GM12878 (cell line): ENCODE measurements at regions of chr13 and their contacts with region 1.

Region 1: GRCh38 chr13:50365408-50366391 is 350.5 kb downstream of the KCNRG start:
- DNase-seq: peak; percentile 67
- ATAC-seq: peak; percentile 81
- H3K4me3 ChIP-seq: no peak overlapping the region
- H3K27ac ChIP-seq: no peak overlapping the region
- H3K4me1 ChIP-seq: peaks cover 24% of the 10 kb centered on the region
- H3K27me3 ChIP-seq: peaks cover 0 to 4% of the 10 kb centered on the region in 2 experiments; a peak in 1 of 4 replicates
- CTCF ChIP-seq: no peak
- EP300 ChIP-seq: peak in 1 of 2 experiments; percentile 42; a peak in 1 of 4 replicates
- POLR2A ChIP-seq: no peak
- RAD21 ChIP-seq: no peak

Region 2: GRCh38 chr13:50123862-50124536 is 241.7 kb before region 1 on chr13:
- CTCF ChIA-PET with region 1: no interaction called
- POLR2A ChIA-PET with region 1: no interaction called
- RAD21 ChIA-PET with region 1: no interaction called
- SMC1A ChIA-PET with region 1: no interaction called
- in situ Hi-C with region 1: no loop called
- intact Hi-C with region 1: loop called (anchors 5 kb)
- DNase-seq: no peak
- ATAC-seq: peak; percentile 80
- H3K4me3 ChIP-seq: peak overlapping the region; percentile 62
- H3K27ac ChIP-seq: no peak overlapping the region
- H3K4me1 ChIP-seq: peaks cover 30% of the 10 kb centered on the region
- H3K27me3 ChIP-seq: peaks cover 5 to 7% of the 10 kb centered on the region in 2 experiments; a peak in 3 of 4 replicates
- CTCF ChIP-seq: peak in 1 of 3 experiments; percentile 10; a peak in 1 of 6 replicates
- EP300 ChIP-seq: no peak
- POLR2A ChIP-seq: peak; percentile 65
- RAD21 ChIP-seq: no peak